Psoas muscle (tissue), 8 donors: ENCODE measurements at regions of chr15 and their contacts with region 1.

Region 1: GRCh38 chr15:82108489-82109078 is 62.8 kb upstream of the MEX3B start:
- DNase-seq: peak; percentile 51 to 80
- ATAC-seq: peak; percentile 91 to 99 (median 98)
- H3K4me3 ChIP-seq: no peak overlapping the region
- H3K27ac ChIP-seq: no peak overlapping the region
- H3K4me1 ChIP-seq: no peaks in the 10 kb centered on the region
- H3K27me3 ChIP-seq: no peaks in the 10 kb centered on the region
- CTCF ChIP-seq: peak; percentile 88

Region 2: GRCh38 chr15:82079736-82080135 is 28.8 kb before region 1 on chr15:
- intact Hi-C with region 1: no loop called
- DNase-seq: no peak
- ATAC-seq: no peak
- H3K4me3 ChIP-seq: no peak overlapping the region
- H3K27ac ChIP-seq: no peak overlapping the region
- H3K4me1 ChIP-seq: no peaks in the 10 kb centered on the region
- H3K27me3 ChIP-seq: peaks cover 0 to 8% (median 0%) of the 10 kb centered on the region in 3 donors
- CTCF ChIP-seq: no peak

Region 3: GRCh38 chr15:82146990-82147461 is 38.4 kb after region 1 on chr15:
- intact Hi-C with region 1: loop called in 1 of 2 experiments (anchors 5 kb)
- DNase-seq: no peak
- ATAC-seq: peak; percentile 66 to 91 (median 86)
- H3K4me3 ChIP-seq: no peak overlapping the region
- H3K27ac ChIP-seq: peak overlapping the region; percentile 67
- H3K4me1 ChIP-seq: no peaks in the 10 kb centered on the region
- H3K27me3 ChIP-seq: no peaks in the 10 kb centered on the region
- CTCF ChIP-seq: no peak

Region 4: GRCh38 chr15:82197733-82198594 is 89.4 kb after region 1 on chr15:
- intact Hi-C with region 1: loop called in 1 of 2 experiments (anchors 1 kb)
- DNase-seq: peak; percentile 39 to 67
- ATAC-seq: peak; percentile 70 to 87 (median 80)
- H3K4me3 ChIP-seq: no peak overlapping the region
- H3K27ac ChIP-seq: no peak overlapping the region
- H3K4me1 ChIP-seq: peaks cover 19% of the 10 kb centered on the region
- H3K27me3 ChIP-seq: no peaks in the 10 kb centered on the region
- CTCF ChIP-seq: peak; percentile 82